ENCODE measurements at regions of chr3 and their contacts with region 1.

Region 1: DNA sequence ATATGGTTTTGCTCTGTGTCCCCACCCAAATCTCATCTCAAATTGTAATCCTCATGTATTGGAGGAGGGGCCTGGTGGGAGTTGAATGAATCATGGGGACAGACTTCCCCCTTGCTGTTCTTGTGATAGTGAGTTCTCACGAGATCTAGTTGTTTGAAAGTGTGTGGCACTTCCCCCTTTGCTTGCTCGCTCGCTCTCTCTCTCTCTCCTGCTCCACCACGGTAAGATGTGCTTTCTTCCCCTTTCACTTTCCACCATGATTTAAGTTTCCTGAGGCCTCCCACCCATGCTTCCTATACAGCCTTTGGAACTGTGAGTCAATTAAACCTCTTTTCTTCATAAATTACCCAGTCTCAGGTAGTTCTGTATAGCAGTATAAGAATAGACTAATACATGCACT is 60.7 kb downstream of the GSK3B start:
- DNase-seq: no peak
- ATAC-seq: no peak
- H3K4me3 ChIP-seq: no peak overlapping the region
- H3K27ac ChIP-seq: no peak overlapping the region
- H3K4me1 ChIP-seq: no peaks in the 10 kb centered on the region
- H3K27me3 ChIP-seq: no peaks in the 10 kb centered on the region
- CTCF ChIP-seq: no peak
- POLR2A ChIP-seq: no peak
- RAD21 ChIP-seq: no peak

Region 2: DNA sequence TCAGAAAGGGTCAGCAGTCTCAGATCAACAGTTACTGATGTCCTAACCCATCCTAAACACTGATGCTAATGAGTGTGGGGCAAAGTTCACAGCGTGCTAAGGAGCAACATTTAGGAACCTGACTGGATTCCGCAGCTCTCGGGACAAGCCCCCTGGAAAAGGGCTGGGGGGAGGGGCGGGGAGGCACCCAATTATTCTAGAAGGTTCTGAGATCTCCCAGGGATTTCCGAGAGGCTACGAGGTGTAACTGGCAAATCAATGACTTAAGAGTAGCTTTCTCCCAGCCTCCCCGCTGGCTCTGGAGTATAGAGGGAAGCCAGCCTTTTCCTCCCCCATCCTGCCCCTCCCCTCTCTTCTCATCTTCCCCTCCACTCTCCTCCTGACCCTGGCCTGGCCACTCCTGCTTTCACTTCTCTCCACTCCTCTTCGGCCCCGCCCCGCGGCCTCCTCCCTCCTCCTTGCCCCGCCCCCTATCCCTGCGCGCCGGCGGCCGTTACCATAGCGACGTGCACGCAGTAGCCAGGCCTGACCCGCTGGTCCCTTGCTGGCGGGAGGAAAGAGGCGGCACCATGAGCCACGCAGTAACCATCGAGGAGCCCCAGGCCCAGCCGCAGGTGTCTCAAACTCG is 331.0 kb before region 1 on chr3 and contains the start of gene CFAP91:
- CTCF ChIA-PET with region 1: no interaction called
- POLR2A ChIA-PET with region 1: no interaction called
- dilution Hi-C with region 1: no loop called
- in situ Hi-C with region 1: no loop called
- intact Hi-C with region 1: no loop called
- DNase-seq: peak; percentile 83
- ATAC-seq: peak; percentile 100
- H3K4me3 ChIP-seq: peak within 1 kb of the TSS; percentile 42
- H3K27ac ChIP-seq: no peak within 1 kb of the TSS
- H3K4me1 ChIP-seq: 0 out of 2 replicates have a peak, but pooled peaks cover 2% of the 10 kb centered on the region
- H3K27me3 ChIP-seq: peaks cover 18% of the 10 kb centered on the region
- CTCF ChIP-seq: no peak
- POLR2A ChIP-seq: no peak
- RAD21 ChIP-seq: no peak
- total RNA-seq, gene CFAP91: not detected in 2 replicates

Region 3: GRCh38 chr3:120077731-120078130 is 44.1 kb after region 1 on chr3:
- CTCF ChIA-PET with region 1: no interaction called
- POLR2A ChIA-PET with region 1: no interaction called
- dilution Hi-C with region 1: no loop called
- in situ Hi-C with region 1: no loop called
- intact Hi-C with region 1: loop called (anchors 5 kb)
- DNase-seq: no peak
- ATAC-seq: no peak; the same call in 1 of the 2 replicates
- H3K4me3 ChIP-seq: no peak overlapping the region
- H3K27ac ChIP-seq: no peak overlapping the region
- H3K4me1 ChIP-seq: no peaks in the 10 kb centered on the region
- H3K27me3 ChIP-seq: no peaks in the 10 kb centered on the region
- CTCF ChIP-seq: no peak
- POLR2A ChIP-seq: no peak
- RAD21 ChIP-seq: no peak

Measured in IMR-90 (cell line).